ENCODE measurements at regions of chr3 and their contacts with region 1.

Region 1: GRCh38 chr3:183285828-183286457 is 32.9 kb downstream of the B3GNT5 start:
- DNase-seq: peak; percentile 98
- H3K4me3 Mint-ChIP-seq: peak overlapping the region; percentile 67
- H3K27ac Mint-ChIP-seq: peak overlapping the region; percentile 97
- H3K4me1 Mint-ChIP-seq: peaks cover 40% of the 10 kb centered on the region
- H3K27me3 Mint-ChIP-seq: no peaks in the 10 kb centered on the region

Region 2: DNA sequence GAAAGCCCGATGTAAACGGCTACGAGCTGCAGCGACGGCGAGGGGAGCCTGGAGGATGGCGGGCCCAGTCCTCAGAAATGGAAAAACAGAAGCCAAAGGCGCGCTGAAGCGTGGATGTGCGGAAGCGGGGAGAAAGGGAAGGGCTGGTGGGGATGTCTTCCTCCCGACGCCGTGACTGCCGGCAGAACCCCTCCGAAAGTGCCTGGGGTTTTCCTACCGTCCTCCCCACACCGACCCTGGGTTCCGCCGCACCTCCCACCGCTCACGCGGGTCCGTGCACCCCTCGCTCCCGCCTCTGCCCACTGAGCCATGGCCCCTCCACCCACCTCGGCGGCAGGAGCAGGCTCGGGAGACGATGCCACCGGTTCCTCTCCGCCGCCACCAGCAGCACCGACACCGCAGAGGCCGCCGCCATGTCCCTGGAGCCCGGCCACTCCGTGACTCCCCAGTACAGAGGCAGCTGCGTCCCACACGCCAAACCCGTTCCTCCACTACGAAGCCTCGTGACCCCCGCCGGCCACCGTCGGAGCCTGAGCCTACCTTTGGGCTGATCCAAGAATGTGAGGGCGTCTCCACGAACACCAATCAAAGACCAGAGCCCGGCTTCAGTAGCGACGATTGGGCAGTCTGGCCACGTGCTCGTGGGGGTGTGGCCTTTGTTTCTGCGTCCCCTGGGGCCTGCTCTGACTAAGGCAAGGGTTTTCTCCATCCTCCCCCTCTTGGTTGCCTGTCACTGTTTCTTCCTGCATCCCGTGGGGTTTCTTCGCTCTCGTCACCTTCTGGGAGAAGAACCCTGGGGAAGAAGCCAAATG is 186.7 kb before region 1 on chr3 and contains the start of gene MCCC1:
- CTCF ChIA-PET with region 1: interaction called, 5 read pairs
- intact Hi-C with region 1: loop called (anchors 1 kb)
- DNase-seq: peak; percentile 99
- H3K4me3 Mint-ChIP-seq: peak within 1 kb of the TSS; percentile 97
- H3K27ac Mint-ChIP-seq: peak within 1 kb of the TSS; percentile 91
- H3K4me1 Mint-ChIP-seq: peaks cover 33% of the 10 kb centered on the region
- H3K27me3 Mint-ChIP-seq: no peaks in the 10 kb centered on the region
- total RNA-seq, gene MCCC1: 21.0 to 24.9 TPM

Region 3: GRCh38 chr3:183210839-183211341 is 75.1 kb before region 1 on chr3:
- CTCF ChIA-PET with region 1: interaction called, 3 read pairs
- intact Hi-C with region 1: loop called (anchors 1 kb)
- DNase-seq: peak; percentile 73
- H3K4me3 Mint-ChIP-seq: no peak overlapping the region
- H3K27ac Mint-ChIP-seq: peak overlapping the region; percentile 85
- H3K4me1 Mint-ChIP-seq: peaks cover 63% of the 10 kb centered on the region
- H3K27me3 Mint-ChIP-seq: no peaks in the 10 kb centered on the region

Region 4: GRCh38 chr3:183306798-183307671 is 21.1 kb after region 1 on chr3:
- CTCF ChIA-PET with region 1: no interaction called
- intact Hi-C with region 1: loop called (anchors 1 kb)
- DNase-seq: peak; percentile 71
- H3K4me3 Mint-ChIP-seq: peak overlapping the region; percentile 19
- H3K27ac Mint-ChIP-seq: peak overlapping the region; percentile 48
- H3K4me1 Mint-ChIP-seq: peaks cover 20% of the 10 kb centered on the region
- H3K27me3 Mint-ChIP-seq: no peaks in the 10 kb centered on the region

Region 5: GRCh38 chr3:183349421-183350157 is 63.6 kb after region 1 on chr3:
- CTCF ChIA-PET with region 1: interaction called, 6 read pairs
- intact Hi-C with region 1: loop called (anchors 1 kb)
- DNase-seq: no peak
- H3K4me3 Mint-ChIP-seq: no peak overlapping the region
- H3K27ac Mint-ChIP-seq: no peak overlapping the region
- H3K4me1 Mint-ChIP-seq: peaks cover 21% of the 10 kb centered on the region
- H3K27me3 Mint-ChIP-seq: peaks cover 2% of the 10 kb centered on the region

Region 6: DNA sequence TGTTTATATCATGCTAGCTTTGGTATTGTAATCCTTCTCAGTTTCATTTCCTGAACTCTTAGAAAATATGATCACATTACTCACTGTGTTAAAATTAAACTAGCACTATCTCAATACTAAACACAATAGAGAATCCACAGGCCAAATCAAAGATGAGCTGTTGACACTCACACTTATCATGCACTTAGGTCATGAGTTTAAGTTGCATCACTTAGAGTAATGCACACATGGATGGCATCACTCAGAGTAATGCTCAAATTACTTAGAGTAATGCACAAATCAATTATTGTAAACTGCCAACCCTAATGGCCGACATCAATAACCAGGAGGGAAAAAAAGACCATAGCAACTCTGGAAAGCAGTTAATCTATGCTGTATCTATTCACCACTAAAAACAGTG is 182.5 kb after region 1 on chr3:
- CTCF ChIA-PET with region 1: no interaction called
- intact Hi-C with region 1: loop called (anchors 2 kb)
- DNase-seq: no peak
- H3K4me3 Mint-ChIP-seq: no peak overlapping the region
- H3K27ac Mint-ChIP-seq: peak overlapping the region; percentile 87
- H3K4me1 Mint-ChIP-seq: peaks cover 27% of the 10 kb centered on the region
- H3K27me3 Mint-ChIP-seq: no peaks in the 10 kb centered on the region